CD8-positive, alpha-beta memory T cell (primary cell): ENCODE measurements at regions of chr2 and their contacts with region 1.

Region 1: DNA sequence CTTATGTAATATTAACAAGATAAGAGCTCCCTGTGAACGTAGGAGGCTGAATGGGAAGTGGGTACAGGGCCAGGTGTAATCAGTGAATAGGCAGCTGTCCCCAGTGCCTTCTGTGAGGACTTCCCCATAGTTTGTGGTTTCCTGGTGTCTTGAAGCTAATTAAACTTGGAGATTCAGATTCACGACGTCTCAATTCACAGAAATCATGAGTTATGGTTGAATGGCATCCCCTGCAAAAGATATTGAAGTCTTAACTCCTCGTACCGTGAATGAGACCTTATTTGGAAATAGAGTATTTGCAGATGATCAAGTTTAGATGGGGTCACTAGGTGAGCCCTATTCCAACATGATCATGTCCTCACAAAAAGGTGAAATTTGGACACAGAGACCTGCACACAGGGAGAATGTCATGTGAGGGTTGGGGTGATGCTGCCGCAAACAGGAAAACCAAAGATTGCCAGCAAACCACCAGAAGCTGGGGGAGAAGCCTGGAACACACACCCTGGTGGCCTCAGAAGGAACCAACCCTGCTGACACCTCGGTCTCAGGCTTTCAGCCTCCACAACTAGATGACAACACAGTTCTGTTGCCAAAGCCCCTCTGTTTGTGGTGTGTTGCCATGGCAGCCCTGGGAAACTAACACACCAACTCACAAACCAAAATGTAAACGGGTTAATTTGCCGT is 13.2 kb downstream of the ARL4C start:
- DNase-seq: peak; percentile 74 to 92 (median 89)
- H3K4me3 ChIP-seq: peak overlapping the region; percentile 3
- H3K4me3 Mint-ChIP-seq: peak overlapping the region; percentile 74 to 88 (median 75)
- H3K27ac ChIP-seq: peak overlapping the region; percentile 84
- H3K27ac Mint-ChIP-seq: peak overlapping the region; percentile 94 to 100 (median 98)
- H3K4me1 ChIP-seq: peaks cover 69% of the 10 kb centered on the region
- H3K4me1 Mint-ChIP-seq: peaks cover 72 to 96% (median 96%) of the 10 kb centered on the region in 3 donors
- H3K27me3 ChIP-seq: no peaks in the 10 kb centered on the region
- H3K27me3 Mint-ChIP-seq: peaks cover 0 to 2% of the 10 kb centered on the region in 2 donors

Region 2: GRCh38 chr2:234500394-234501006 is 16.8 kb after region 1 on chr2:
- CTCF ChIA-PET with region 1: interaction called, 15 read pairs
- POLR2A ChIA-PET with region 1: interaction called, 8 read pairs
- DNase-seq: peak; percentile 60 to 86 (median 71)
- H3K4me3 ChIP-seq: no peak overlapping the region
- H3K4me3 Mint-ChIP-seq: peak overlapping the region; percentile 21 to 88 (median 67)
- H3K27ac ChIP-seq: no peak overlapping the region
- H3K27ac Mint-ChIP-seq: peak overlapping the region; percentile 85 to 99 (median 96)
- H3K4me1 ChIP-seq: peaks cover 33% of the 10 kb centered on the region
- H3K4me1 Mint-ChIP-seq: peaks cover 30 to 32% (median 31%) of the 10 kb centered on the region in 3 donors
- H3K27me3 ChIP-seq: no peaks in the 10 kb centered on the region
- H3K27me3 Mint-ChIP-seq: peaks cover 0 to 11% of the 10 kb centered on the region in 2 donors